ENCODE measurements at regions of chr5 and their contacts with region 1.

Region 1: DNA sequence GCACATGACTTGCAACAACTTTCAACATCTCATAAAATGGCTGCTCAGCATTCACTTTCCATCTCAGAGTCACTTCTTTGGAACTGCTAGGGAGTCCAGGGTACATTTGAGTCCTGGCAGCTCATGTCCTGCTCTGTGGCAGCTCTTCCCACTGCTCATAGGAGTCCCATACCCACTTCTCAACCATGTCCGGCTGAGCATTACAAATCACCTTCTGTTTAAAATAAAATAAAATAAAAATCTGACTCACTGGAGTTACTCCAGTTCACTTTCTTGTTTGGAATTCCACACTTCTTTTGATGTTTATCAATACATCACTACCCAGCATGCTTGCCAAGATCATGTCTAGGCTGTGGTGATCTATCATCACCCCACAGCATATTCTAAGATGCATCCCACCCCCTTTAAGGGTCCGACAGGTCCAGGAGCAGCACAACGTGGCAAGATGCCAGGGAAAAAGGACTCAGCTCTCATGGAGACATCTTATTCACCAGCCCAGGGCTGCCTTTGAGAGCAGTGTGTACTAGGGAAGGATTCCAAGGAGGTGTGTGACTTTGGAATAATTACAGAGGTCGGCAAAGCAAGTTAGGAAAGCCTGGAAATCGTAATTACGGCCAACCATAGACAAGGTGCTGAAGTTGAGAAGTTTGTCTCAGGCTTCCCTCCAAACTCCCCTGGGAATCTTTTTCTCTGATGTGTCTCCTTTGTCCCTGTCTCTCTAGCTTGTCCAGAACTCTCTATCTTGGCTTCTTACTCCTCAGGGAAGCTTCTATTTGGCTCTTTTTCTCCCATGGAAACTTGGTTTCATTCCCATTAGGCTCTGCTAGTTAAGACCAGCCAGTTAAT is 111.4 kb upstream of the SLC1A3 start:
- DNase-seq: no peak
- H3K4me3 ChIP-seq: no peak overlapping the region
- H3K27ac ChIP-seq: no peak overlapping the region
- H3K4me1 ChIP-seq: no peaks in the 10 kb centered on the region
- H3K27me3 ChIP-seq: no peaks in the 10 kb centered on the region

Region 2: GRCh38 chr5:36507332-36507952 is 12.5 kb after region 1 on chr5:
- CTCF ChIA-PET with region 1: interaction called, 13 read pairs
- POLR2A ChIA-PET with region 1: no interaction called
- DNase-seq: peak; percentile 67 to 82 (median 76)
- H3K4me3 ChIP-seq: no peak overlapping the region
- H3K27ac ChIP-seq: no peak overlapping the region
- H3K4me1 ChIP-seq: no peaks in the 10 kb centered on the region
- H3K27me3 ChIP-seq: no peaks in the 10 kb centered on the region

Region 3: DNA sequence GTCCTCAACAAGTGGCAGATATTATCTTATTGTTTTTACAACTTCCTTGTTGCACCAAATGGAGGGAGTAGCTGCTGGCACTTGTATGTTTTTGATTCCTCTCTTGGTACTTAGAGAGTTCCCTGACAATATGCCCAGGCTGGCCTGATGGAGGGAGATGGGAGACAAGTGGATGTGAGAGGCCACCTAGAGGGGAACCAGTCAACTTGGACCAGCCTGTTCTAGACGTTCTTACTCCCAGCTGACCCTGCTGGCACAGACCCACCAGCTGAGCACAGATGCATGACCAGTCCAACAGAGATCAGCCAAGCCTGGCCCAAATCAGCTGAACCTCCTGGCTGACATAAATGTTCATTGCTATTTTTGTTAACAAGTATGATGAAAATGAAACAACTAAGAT is 1405.7 kb after region 1 on chr5:
- CTCF ChIA-PET with region 1: no interaction called
- POLR2A ChIA-PET with region 1: no interaction called
- DNase-seq: peak in 2 of 3 donors; percentile 5 to 6
- H3K4me3 ChIP-seq: no peak overlapping the region
- H3K27ac ChIP-seq: no peak overlapping the region
- H3K4me1 ChIP-seq: no peaks in the 10 kb centered on the region
- H3K27me3 ChIP-seq: peaks cover 0 to 5% (median 2%) of the 10 kb centered on the region in 5 experiments

Measured in common myeloid progenitor, CD34-positive (primary cell).